ENCODE measurements at regions of chr3 and their contacts with region 1.

Region 1: GRCh38 chr3:11060500-11061251 is 68.1 kb downstream of the SLC6A1 start:
- DNase-seq: peak in 1 of 2 experiments; percentile 76
- H3K4me3 ChIP-seq: 0 out of 2 replicates have a peak overlapping the region, but pooled peaks have one; percentile 15
- H3K27ac ChIP-seq: no peak overlapping the region
- H3K4me1 ChIP-seq: no peaks in the 10 kb centered on the region
- H3K27me3 ChIP-seq: peaks cover 33% of the 10 kb centered on the region
- CTCF ChIP-seq: peak; percentile 93

Region 2: GRCh38 chr3:10553591-10554235 is 507.0 kb before region 1 on chr3:
- CTCF ChIA-PET with region 1: interaction called, 12 read pairs
- POLR2A ChIA-PET with region 1: no interaction called
- intact Hi-C with region 1: no loop called
- DNase-seq: no peak
- H3K4me3 ChIP-seq: no peak overlapping the region
- H3K27ac ChIP-seq: no peak overlapping the region
- H3K4me1 ChIP-seq: no peaks in the 10 kb centered on the region
- H3K27me3 ChIP-seq: peaks cover 92% of the 10 kb centered on the region
- CTCF ChIP-seq: no peak

Region 3: GRCh38 chr3:10945683-10946287 is 114.9 kb before region 1 on chr3:
- CTCF ChIA-PET with region 1: interaction called, 3 read pairs
- POLR2A ChIA-PET with region 1: no interaction called
- intact Hi-C with region 1: loop called (anchors 1 kb)
- DNase-seq: peak in 1 of 2 experiments; percentile 27
- H3K4me3 ChIP-seq: no peak overlapping the region
- H3K27ac ChIP-seq: no peak overlapping the region
- H3K4me1 ChIP-seq: no peaks in the 10 kb centered on the region
- H3K27me3 ChIP-seq: peaks cover 73% of the 10 kb centered on the region
- CTCF ChIP-seq: peak; percentile 91

Region 4: DNA sequence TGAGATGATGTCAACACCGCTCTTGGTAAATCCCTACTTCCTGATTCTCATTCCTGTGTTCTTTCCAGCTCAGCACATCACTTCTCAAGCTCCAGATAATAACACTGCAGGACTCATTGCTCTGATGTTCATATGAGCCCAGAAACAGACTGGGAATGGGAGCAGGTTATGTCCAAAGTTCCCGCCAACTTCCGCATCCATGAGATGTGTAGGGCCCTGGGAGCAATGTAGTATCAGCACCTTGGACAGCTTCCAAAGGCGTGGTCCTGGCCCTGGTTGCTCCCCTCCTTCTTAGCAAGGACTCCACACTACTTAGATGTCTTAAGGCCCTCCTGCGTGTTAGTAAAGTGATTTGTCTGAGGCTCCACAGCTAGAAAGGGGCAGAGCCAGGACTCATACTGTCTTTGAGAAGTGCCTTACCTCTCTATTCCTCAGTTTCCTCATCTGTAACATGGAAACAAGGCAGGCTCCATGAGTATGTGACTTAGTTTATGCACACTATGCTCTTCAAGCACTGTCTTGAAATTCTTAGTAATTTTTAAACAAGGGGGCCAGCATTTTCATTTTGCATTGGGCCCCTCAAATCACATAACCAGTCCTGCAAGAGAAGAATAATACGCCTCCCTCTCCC is 96.0 kb before region 1 on chr3:
- CTCF ChIA-PET with region 1: no interaction called
- POLR2A ChIA-PET with region 1: no interaction called
- intact Hi-C with region 1: no loop called
- DNase-seq: peak in 1 of 2 experiments; percentile 3
- H3K4me3 ChIP-seq: no peak overlapping the region
- H3K27ac ChIP-seq: no peak overlapping the region
- H3K4me1 ChIP-seq: no peaks in the 10 kb centered on the region
- H3K27me3 ChIP-seq: peaks cover 85% of the 10 kb centered on the region
- CTCF ChIP-seq: no peak

Region 5: DNA sequence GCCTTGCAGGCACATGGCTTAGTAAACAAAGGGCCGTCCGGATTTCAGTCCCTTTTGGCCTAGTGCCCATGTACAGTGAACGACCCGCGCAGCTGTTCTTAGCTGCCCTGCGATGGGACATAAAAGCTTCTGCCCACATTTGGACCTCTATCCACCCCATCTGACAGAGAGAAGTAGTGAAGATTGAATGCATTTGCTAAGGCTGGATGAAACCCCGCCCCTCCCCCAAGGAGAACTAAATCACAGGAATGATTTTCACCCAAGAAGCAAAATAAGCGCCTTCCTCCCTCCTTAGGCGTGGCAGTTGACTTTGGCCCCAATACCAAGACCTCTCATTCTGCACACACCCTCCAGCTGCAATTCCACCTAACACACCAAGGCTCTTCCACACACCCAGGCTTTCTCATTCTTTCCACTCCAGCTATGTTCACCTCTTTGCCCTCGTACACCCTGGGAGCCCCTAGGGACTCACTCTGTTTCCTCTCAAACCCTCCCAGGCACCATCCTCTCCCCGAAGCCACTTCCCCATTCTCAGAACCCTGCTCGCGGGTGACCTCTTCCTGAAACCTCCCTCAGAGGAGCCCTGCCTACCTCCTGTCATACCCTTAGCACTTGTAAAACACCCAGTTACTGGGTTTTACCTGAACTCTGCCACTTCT is 79.5 kb after region 1 on chr3:
- CTCF ChIA-PET with region 1: interaction called, 4 read pairs
- POLR2A ChIA-PET with region 1: interaction called, 9 read pairs
- intact Hi-C with region 1: loop called (anchors 1 kb)
- DNase-seq: peak; percentile 77 to 79
- H3K4me3 ChIP-seq: peak overlapping the region; percentile 28; the same call in 1 of the 2 replicates
- H3K27ac ChIP-seq: peak overlapping the region; percentile 68
- H3K4me1 ChIP-seq: peaks cover 52% of the 10 kb centered on the region
- H3K27me3 ChIP-seq: no peaks in the 10 kb centered on the region
- CTCF ChIP-seq: no peak

Region 6: DNA sequence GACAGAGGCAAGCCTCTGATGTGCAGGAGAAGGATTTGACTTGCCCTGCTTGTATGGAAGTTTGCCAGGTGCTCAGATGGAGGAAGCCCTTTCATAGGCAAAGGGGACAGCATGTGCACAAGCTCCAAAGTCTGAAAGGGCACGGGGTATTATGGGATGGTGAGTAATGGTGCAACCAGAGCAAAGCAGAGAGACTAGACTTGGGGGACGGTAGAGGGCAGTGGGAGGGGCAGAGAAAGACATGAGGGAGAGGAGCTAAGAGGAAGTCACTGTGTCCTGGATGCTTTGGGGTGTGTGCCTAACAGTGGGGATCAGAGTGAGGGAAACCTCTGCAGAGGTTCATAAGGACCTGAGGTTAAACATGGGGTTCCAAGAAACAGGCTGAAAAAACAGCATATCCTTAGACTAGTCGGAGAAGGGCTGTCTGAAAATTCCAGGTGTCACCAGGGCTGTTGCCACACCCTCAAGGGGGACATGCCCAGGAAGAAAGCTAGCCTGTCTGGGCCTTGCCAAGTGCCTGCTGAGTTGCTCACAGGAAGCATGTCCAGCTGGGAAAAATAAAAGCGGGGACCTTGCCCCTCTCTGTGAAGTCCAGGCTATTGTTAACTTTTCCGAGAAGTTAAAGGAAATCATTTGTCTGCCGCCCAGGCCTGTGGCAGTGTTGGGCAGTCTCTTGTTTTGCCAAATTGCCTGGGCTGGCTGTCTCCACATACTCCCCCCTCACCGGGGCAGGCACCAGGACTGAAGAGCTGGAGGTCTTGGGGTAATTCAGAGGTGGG is 140.8 kb after region 1 on chr3:
- CTCF ChIA-PET with region 1: interaction called, 3 read pairs
- POLR2A ChIA-PET with region 1: no interaction called
- intact Hi-C with region 1: loop called (anchors 1 kb)
- DNase-seq: peak in 1 of 2 experiments; percentile 71
- H3K4me3 ChIP-seq: no peak overlapping the region
- H3K27ac ChIP-seq: no peak overlapping the region
- H3K4me1 ChIP-seq: peaks cover 12% of the 10 kb centered on the region
- H3K27me3 ChIP-seq: no peaks in the 10 kb centered on the region
- CTCF ChIP-seq: no peak

Region 7: GRCh38 chr3:11236595-11237461 is 176.2 kb after region 1 on chr3:
- CTCF ChIA-PET with region 1: interaction called, 3 read pairs
- POLR2A ChIA-PET with region 1: no interaction called
- intact Hi-C with region 1: loop called (anchors 2 kb)
- DNase-seq: peak; percentile 59 to 88
- H3K4me3 ChIP-seq: peak overlapping the region; percentile 33; the same call in 1 of the 2 replicates
- H3K27ac ChIP-seq: peak overlapping the region; percentile 99
- H3K4me1 ChIP-seq: peaks cover 41% of the 10 kb centered on the region
- H3K27me3 ChIP-seq: no peaks in the 10 kb centered on the region
- CTCF ChIP-seq: peak; percentile 93

Region 8: DNA sequence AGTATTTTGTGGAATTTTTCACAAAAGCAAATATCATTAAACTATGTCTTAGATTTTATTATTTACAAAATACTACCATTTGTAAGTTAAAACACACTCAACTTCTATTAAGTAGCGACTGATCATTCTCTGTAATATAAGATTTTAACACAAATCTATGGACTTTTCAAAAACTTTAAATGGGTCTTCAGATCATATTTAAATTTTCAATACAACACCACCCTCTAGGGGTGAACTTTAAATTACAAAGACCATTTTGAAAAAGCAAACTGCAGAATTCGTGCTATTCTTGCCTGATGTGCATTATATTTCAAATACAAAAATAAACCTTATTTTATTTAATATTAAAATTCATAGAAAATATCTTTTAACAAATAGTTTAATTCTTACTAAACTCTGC is 591.2 kb after region 1 on chr3:
- CTCF ChIA-PET with region 1: no interaction called
- POLR2A ChIA-PET with region 1: no interaction called
- intact Hi-C with region 1: loop called (anchors 5 kb)
- DNase-seq: no peak
- H3K4me3 ChIP-seq: no peak overlapping the region
- H3K27ac ChIP-seq: no peak overlapping the region
- H3K4me1 ChIP-seq: no peaks in the 10 kb centered on the region
- H3K27me3 ChIP-seq: no peaks in the 10 kb centered on the region
- CTCF ChIP-seq: peak; percentile 80